Activated naive CD8-positive, alpha-beta T cell treated with anti-CD3 and anti-CD28 coated beads, Interleukin-2, amount 10 ng/mL, durations not matched to agents 7 days and 5 days (primary cell): ENCODE measurements at regions of chr22 and their contacts with region 1.

Region 1: GRCh38 chr22:37244114-37244921 is at the start of gene RAC2:
- DNase-seq: peak; percentile 91
- ATAC-seq: peak; percentile 64
- H3K4me3 Mint-ChIP-seq: peak within 1 kb of the TSS; percentile 100
- H3K27ac Mint-ChIP-seq: peak within 1 kb of the TSS; percentile 100
- H3K4me1 Mint-ChIP-seq: peaks cover 33% of the 10 kb centered on the region
- H3K27me3 Mint-ChIP-seq: no peaks in the 10 kb centered on the region
- total RNA-seq, gene RAC2: 963 to 1,011 TPM

Region 2: GRCh38 chr22:37077884-37078485 is 166.3 kb before region 1 on chr22:
- POLR2A ChIA-PET with region 1: interaction called, 30 read pairs
- DNase-seq: peak; percentile 94
- ATAC-seq: peak; percentile 17
- H3K4me3 Mint-ChIP-seq: peak overlapping the region; percentile 85
- H3K27ac Mint-ChIP-seq: peak overlapping the region; percentile 100
- H3K4me1 Mint-ChIP-seq: peaks cover 47% of the 10 kb centered on the region
- H3K27me3 Mint-ChIP-seq: no peaks in the 10 kb centered on the region

Region 3: DNA sequence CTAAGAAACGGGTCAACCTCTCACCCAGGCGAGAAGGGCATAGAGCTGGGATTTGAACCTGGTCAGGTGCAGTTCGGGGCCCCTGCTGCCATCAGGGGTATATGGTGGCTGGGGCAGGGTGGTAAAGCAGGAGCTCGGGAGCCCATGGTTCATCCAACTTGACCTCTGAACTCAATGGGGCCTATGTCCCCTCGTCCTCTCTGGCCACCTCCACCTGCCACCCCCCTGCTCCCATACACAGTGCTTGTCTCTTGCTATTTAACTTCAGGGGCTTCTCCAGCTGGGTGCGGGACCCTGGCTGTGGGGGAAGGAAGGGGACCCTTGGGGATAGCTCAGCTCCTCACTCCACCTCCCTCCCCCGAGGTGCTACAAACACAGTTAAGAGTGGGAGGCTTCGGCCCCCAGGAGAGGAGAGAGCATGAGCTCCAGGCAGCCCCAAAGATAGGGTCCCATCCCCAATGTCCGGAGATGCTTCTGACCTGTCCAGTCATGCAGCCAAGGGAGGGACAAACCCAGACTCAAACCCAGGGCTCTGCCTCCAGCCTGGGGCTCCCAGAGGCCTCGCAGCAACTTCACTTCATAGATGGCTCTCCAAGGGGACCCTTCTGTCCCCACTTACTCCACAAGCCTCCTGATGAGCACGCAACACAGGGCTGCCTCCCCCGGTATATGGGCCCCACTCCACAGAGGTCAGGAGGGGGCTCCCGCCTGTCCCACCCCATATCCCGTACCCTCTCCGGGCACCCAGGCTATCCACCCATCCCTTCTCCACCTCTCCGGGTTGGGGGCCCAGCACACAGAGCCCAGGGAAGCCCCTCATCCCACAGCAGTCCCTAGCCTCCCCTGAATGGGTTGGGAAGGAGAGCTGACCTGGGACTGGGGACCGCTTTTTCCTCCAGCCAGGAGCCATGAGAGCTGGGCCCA is 95.3 kb before region 1 on chr22:
- POLR2A ChIA-PET with region 1: interaction called, 11 read pairs
- DNase-seq: no peak
- ATAC-seq: no peak
- H3K4me3 Mint-ChIP-seq: peak overlapping the region; percentile 95
- H3K27ac Mint-ChIP-seq: peak overlapping the region; percentile 95
- H3K4me1 Mint-ChIP-seq: peaks cover 48% of the 10 kb centered on the region
- H3K27me3 Mint-ChIP-seq: no peaks in the 10 kb centered on the region

Region 4: GRCh38 chr22:37199103-37199759 is 45.1 kb before region 1 on chr22:
- POLR2A ChIA-PET with region 1: interaction called, 36 read pairs
- DNase-seq: peak; percentile 100
- ATAC-seq: peak; percentile 97
- H3K4me3 Mint-ChIP-seq: peak overlapping the region; percentile 81
- H3K27ac Mint-ChIP-seq: peak overlapping the region; percentile 97
- H3K4me1 Mint-ChIP-seq: peaks cover 37% of the 10 kb centered on the region
- H3K27me3 Mint-ChIP-seq: no peaks in the 10 kb centered on the region

Region 5: GRCh38 chr22:37229805-37230672 is 14.3 kb before region 1 on chr22:
- POLR2A ChIA-PET with region 1: interaction called, 424 read pairs
- DNase-seq: peak; percentile 84
- ATAC-seq: peak; percentile 59
- H3K4me3 Mint-ChIP-seq: peak overlapping the region; percentile 84
- H3K27ac Mint-ChIP-seq: peak overlapping the region; percentile 99
- H3K4me1 Mint-ChIP-seq: peaks cover 85% of the 10 kb centered on the region
- H3K27me3 Mint-ChIP-seq: no peaks in the 10 kb centered on the region

Region 6: DNA sequence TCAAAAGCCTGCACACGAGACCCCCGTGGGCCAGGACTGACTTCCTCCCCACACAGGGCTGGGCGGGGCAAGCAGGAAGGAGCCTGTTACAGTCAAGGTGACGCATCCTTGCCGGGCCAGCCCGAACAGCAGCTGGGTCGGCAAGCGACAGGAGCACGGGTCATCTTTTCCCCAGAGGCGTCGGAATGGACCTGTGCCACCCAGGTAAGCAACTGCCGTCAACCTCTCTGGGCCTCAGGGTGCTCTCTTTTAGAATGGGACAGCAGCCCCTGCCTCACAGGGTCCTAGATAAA is 38.0 kb after region 1 on chr22 and contains the start of gene CYTH4:
- POLR2A ChIA-PET with region 1: interaction called, 51 read pairs
- DNase-seq: peak; percentile 79
- ATAC-seq: peak; percentile 87
- H3K4me3 Mint-ChIP-seq: peak within 1 kb of the TSS; percentile 89
- H3K27ac Mint-ChIP-seq: peak within 1 kb of the TSS; percentile 99
- H3K4me1 Mint-ChIP-seq: peaks cover 50% of the 10 kb centered on the region
- H3K27me3 Mint-ChIP-seq: no peaks in the 10 kb centered on the region
- total RNA-seq, gene CYTH4: 149 to 157 TPM

Region 7: GRCh38 chr22:37309211-37310074 is 65.1 kb after region 1 on chr22:
- POLR2A ChIA-PET with region 1: interaction called, 26 read pairs
- DNase-seq: peak; percentile 73
- ATAC-seq: peak; percentile 58
- H3K4me3 Mint-ChIP-seq: peak overlapping the region; percentile 83
- H3K27ac Mint-ChIP-seq: peak overlapping the region; percentile 99
- H3K4me1 Mint-ChIP-seq: peaks cover 83% of the 10 kb centered on the region
- H3K27me3 Mint-ChIP-seq: no peaks in the 10 kb centered on the region